GM10248 (cell line): ENCODE measurements at regions of chr5 and their contacts with region 1.

Region 1: GRCh38 chr5:133111299-133111698 is 59.5 kb downstream of the HSPA4 start:
- DNase-seq: peak; percentile 78
- CTCF ChIP-seq: peak; percentile 92

Region 2: DNA sequence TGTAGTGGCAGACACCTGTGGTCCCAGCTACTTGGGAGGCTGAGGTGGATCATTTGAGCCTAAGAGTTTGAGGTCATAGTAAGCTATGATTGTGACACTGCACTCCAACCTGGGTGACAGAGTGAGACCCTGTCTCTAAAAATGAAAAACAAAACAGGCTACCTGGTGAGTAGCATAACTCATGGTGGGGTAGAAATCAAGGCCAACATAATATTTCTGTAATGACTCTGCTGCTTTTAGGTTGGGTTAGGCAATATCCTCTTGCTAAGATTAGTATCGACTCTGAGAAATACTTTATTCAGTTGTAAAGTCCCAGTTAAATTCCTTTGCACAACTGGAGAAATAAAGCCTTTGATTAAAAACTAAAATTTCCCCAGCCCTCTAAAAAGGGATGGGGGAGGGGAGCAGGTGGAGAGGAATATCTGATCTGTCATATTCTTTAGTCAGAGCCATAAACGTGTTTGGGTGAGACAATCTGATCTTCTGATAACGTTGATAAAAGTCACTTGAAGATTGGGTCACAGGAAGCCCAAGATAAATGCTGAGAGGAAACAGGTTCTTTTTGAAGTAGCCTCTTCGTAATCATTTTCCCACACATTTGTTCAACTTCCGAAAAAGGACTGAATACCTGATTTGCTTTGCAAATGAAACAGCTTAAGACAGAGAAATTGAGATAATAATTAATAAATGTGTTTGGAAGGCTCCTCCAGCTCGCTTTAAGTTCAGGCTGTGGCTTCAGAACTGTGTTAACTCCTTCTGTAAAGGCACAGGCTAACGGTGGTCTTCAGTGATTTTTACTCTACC is 422.6 kb before region 1 on chr5:
- CTCF ChIA-PET with region 1: no interaction called
- POLR2A ChIA-PET with region 1: no interaction called
- DNase-seq: peak; percentile 38
- CTCF ChIP-seq: no peak

Region 3: DNA sequence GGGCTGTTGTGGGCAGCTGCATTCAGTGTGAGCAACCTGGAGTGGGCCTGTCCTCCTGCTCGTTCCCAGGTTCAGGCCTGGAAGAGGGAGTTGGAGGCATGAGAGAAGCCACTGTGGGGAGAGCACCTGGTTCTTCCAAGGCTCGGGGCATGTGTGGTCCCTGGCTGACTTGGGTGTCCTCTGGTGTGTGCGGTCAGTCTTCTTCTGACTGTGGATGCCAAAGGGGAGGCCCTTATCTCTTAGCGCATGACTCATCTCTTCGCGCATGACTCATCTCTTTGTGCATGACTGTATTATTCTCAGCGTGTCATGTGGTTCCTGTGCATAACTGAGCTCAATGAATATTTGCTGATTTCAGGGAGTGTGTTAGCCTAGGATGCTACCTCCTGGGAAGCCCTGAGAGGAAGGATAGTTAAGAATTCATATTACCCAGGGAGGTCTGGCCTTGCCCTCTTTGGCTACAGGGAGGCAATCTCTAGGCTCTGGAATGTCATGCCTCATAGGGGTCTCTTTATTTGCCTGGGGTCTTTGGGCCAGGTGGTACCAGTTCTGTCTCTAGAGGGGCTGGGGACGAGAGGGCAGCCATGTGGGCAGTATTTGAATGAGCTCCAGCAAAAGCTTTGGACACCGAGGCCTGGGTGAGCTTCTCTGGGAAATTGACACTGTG is 129.3 kb after region 1 on chr5:
- CTCF ChIA-PET with region 1: interaction called, 35 read pairs
- POLR2A ChIA-PET with region 1: no interaction called
- DNase-seq: peak; percentile 80
- CTCF ChIP-seq: no peak

Region 4: DNA sequence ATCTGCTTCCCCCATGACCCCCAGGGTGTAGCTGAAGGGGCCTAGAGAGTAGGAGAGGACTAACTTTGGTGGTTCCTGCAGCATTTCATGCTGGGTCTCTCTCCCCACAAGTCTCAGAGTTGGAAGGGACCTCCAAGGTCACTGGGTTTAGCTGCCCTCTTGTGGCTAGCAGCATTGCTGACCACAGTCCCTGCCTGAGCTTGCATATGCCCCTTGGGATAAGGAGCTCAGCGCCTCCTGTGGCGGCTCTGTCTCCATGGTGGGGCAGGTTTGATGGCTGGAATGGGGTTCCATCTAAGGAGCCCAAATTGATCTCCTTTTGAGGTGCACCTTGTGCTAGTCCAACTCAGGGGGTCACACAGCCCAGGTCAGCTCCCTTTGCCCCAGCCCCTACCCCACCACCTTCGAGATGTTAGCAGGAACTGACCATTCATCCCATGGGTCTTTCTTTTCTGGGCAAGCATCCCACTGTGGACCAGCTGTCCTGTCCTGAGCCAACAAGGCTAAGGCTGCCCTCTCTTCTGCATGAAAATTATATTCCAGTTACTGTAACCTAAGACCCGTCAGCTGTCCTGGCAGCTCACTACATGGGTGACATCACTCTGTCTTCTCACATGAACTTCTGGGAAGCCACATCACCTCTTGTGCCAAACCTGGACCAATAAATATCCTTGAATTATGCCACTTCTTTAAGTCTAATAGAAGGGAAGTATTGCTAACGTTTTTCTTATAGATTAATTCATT is 136.8 kb after region 1 on chr5:
- CTCF ChIA-PET with region 1: interaction called, 35 read pairs
- POLR2A ChIA-PET with region 1: no interaction called
- DNase-seq: no peak
- CTCF ChIP-seq: peak; percentile 21

Region 5: DNA sequence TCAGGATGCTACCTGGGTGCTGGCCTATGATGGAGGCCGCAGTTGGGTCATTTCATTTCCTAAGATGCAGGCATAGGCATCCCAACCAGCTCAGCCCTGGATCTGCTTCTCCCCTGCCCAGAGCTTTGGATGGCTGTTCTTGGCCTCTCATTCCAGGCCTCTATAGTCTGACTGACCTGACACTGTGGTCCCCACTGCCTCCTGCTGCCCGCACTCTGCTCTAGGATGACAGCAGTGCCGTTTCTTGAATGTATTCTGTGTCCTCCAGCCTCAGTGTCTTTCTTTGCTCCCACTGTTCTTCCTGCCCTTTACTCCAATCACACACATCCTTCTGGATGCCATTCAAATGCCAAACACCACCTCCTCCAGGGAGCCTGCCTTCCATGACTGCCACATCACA is 176.2 kb after region 1 on chr5:
- CTCF ChIA-PET with region 1: interaction called, 58 read pairs
- POLR2A ChIA-PET with region 1: no interaction called
- DNase-seq: peak; percentile 64
- CTCF ChIP-seq: peak; percentile 28

Region 6: GRCh38 chr5:133321833-133322420 is 210.6 kb after region 1 on chr5:
- CTCF ChIA-PET with region 1: interaction called, 12 read pairs
- POLR2A ChIA-PET with region 1: no interaction called
- DNase-seq: peak; percentile 67
- CTCF ChIP-seq: no peak